AG04450 (cell line): ENCODE measurements at regions of chr19 and their contacts with region 1.

Region 1: GRCh38 chr19:8005534-8006256 is at the start of gene ELAVL1:
- DNase-seq: peak; percentile 50
- H3K4me3 ChIP-seq: peak within 1 kb of the TSS; percentile 95
- H3K27ac ChIP-seq: peak within 1 kb of the TSS; percentile 57
- H3K27me3 ChIP-seq: no peaks in the 10 kb centered on the region
- CTCF ChIP-seq: no peak
- polyA plus RNA-seq, gene ELAVL1: 44.7 and 52.3 TPM in 2 replicates

Region 2: GRCh38 chr19:7701654-7702457 is 303.8 kb before region 1 on chr19 and contains the start of gene FCER2:
- CTCF ChIA-PET with region 1: no interaction called
- POLR2A ChIA-PET with region 1: no interaction called
- DNase-seq: no peak
- H3K4me3 ChIP-seq: no peak within 1 kb of the TSS
- H3K27ac ChIP-seq: no peak within 1 kb of the TSS
- H3K27me3 ChIP-seq: peaks cover 4% of the 10 kb centered on the region
- CTCF ChIP-seq: no peak
- polyA plus RNA-seq, gene FCER2: not detected in 2 replicates

Region 3: GRCh38 chr19:7888145-7888825 is 117.4 kb before region 1 on chr19 and contains the start of gene LRRC8E:
- CTCF ChIA-PET with region 1: no interaction called
- POLR2A ChIA-PET with region 1: no interaction called
- DNase-seq: no peak
- H3K4me3 ChIP-seq: peak within 1 kb of the TSS; percentile 71
- H3K27ac ChIP-seq: no peak within 1 kb of the TSS
- H3K27me3 ChIP-seq: peaks cover 2% of the 10 kb centered on the region
- CTCF ChIP-seq: no peak
- polyA plus RNA-seq, gene LRRC8E: 4.1 and 4.7 TPM in 2 replicates

Region 4: DNA sequence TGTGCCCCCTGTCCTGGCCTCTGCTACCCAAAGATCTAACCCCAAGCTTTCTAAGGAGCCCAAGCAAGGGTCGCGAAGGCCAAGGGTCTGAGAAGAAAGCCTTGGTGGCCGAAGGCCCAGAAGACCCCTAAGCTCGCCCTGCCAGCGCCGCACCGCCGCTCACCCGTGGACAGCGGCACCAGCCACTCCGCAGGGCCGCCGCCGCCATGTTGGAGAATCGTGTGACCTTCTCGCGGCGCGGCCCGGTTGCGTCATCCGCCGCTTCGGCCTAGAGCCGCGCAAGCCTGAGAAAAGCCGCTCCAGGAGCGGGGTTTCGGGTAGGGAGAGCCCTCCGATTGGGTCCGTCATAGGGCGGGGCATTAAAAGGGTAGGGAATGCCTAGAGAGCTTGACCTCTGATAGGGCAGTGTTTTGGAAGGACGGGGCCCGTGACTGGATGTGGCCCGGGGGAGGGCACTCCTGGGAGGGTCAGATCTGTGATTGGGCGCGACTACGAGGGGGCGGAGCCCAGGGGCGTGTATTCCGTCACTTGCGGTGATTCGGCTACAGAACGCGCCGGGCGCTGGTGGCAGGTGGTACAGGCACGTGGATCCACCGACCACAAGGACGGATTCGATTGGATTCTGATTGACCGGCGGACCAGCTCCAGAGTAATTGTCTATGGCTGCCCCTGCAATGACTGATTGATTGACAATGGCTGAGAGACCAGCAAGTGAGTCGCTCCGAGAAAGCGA is 62.1 kb before region 1 on chr19 and contains the start of gene TIMM44:
- CTCF ChIA-PET with region 1: interaction called, 44 read pairs
- POLR2A ChIA-PET with region 1: interaction called, 6 read pairs
- DNase-seq: peak; percentile 99
- H3K4me3 ChIP-seq: peak within 1 kb of the TSS; percentile 96
- H3K27ac ChIP-seq: peak within 1 kb of the TSS; percentile 93
- H3K27me3 ChIP-seq: no peaks in the 10 kb centered on the region
- CTCF ChIP-seq: no peak
- polyA plus RNA-seq, gene TIMM44: 42.0 and 43.3 TPM in 2 replicates

Region 5: GRCh38 chr19:7986321-7987083 is 19.2 kb before region 1 on chr19:
- CTCF ChIA-PET with region 1: interaction called, 42 read pairs
- POLR2A ChIA-PET with region 1: no interaction called
- DNase-seq: peak; percentile 34
- H3K4me3 ChIP-seq: no peak overlapping the region
- H3K27ac ChIP-seq: no peak overlapping the region
- H3K27me3 ChIP-seq: no peaks in the 10 kb centered on the region
- CTCF ChIP-seq: no peak

Region 6: DNA sequence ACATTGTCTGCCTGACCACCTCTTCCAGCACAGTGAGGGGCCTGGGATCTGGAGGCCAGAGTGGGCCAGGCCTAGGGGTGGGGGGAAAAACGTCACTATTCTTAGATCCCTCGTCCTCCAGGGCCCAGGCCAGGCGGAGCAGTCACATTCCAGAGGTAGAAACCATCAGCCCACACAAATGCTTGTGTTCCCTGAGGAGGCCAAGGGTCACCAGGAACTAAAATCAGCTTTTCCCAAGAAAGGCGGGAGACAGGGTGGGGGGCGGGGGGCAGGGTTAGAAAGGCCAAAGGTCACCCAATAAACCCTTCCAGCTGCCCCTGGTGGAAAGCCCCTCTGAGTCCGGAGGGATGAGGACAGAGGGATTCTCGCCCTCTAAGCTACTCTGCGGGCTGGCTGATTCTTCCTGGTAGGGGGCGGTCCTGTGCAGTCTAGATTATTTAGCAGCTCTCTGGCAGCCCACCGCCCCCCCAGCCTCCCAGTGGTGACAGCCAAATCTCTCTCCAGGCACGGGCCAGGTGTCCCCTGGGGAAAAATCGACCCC is 23.3 kb after region 1 on chr19:
- CTCF ChIA-PET with region 1: interaction called, 11 read pairs
- POLR2A ChIA-PET with region 1: no interaction called
- DNase-seq: no peak
- H3K4me3 ChIP-seq: no peak overlapping the region
- H3K27ac ChIP-seq: no peak overlapping the region
- H3K27me3 ChIP-seq: no peaks in the 10 kb centered on the region
- CTCF ChIP-seq: no peak